MCF 10A (cell line): ENCODE measurements at regions of chr2 and their contacts with region 1.

Region 1: DNA sequence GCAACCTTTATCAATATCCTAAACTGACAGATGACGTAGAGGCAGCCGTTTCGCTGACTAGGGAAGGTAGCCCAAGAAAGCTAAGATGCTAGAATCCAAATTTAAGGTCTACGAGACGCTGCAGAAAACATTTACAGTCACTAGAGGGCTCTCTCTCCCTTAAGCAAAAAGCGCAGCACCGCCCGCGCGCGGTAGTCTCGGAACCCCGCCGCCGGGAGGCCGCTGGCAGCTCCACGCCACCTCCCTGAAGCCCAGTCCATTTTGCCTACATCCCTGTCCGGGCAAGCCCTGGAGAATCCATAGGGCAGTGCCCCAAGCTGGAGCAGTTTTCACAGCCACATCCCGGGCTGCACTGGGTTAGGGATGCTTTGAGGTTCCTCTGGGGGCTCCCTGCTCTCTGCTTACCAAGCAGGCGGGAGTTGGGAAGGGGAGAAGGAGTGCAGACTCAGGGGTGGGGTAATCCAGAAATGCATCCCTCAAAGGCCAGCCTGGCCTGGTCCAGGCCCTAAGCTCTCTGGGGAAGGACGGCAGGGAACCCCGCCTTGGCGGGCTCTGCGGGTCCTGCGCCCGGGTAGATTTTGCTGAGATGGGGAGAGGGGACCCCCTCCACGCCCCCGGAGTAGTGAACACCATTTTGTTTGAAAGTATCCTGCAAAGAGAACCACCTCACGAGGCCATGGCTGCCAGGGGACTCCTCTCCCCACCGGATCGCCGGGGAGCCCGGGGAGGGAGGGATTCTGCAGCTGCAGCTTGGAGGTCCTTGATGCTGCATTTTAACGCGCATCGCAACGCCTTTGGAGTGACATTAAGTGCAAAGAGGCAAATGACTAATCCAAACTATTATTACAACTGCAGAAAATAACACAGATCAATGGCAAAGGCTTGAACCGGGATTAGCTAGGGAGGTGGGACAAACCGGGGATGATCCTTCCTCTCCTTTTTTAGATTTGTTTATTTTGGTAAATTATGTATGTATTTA is 1.3 kb upstream of the DPYSL5 start:
- DNase-seq: peak; percentile 67
- H3K4me3 Mint-ChIP-seq: no peak overlapping the region
- H3K27ac Mint-ChIP-seq: no peak overlapping the region
- H3K4me1 Mint-ChIP-seq: no peaks in the 10 kb centered on the region
- H3K27me3 Mint-ChIP-seq: peaks cover 54% of the 10 kb centered on the region
- CTCF ChIP-seq: peak; percentile 86

Region 2: DNA sequence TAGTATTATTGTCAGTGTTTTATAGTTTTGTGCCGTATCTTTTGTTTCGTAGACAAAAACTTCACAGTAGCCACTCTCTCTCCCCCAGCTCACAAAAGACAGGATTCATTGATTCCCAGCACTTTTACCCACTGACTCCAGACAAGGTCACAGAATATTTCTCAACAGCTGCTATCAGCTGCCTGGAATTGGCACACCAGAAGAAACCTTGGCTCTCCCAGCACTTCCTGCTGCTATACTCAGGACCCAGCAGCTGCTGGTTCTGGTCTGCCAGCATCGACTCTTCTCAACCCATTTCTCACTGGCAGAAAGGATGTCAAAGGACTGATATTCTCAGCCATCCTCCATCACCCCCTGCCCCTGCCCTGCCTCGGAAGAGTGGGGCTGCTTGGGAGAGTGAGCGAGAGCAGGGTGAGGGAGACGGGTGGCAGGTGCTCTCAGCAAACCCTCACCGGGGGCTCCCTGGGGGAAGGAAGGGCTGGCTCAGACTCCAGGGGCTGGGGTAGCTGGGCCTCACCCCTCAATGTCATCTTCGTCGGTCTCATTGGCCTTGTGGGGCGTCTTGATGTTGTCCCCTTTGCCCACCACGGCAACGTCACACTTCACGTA is 362.6 kb before region 1 on chr2:
- CTCF ChIA-PET with region 1: no interaction called
- POLR2A ChIA-PET with region 1: no interaction called
- intact Hi-C with region 1: no loop called
- DNase-seq: no peak
- H3K4me3 Mint-ChIP-seq: no peak overlapping the region
- H3K27ac Mint-ChIP-seq: no peak overlapping the region
- H3K4me1 Mint-ChIP-seq: no peaks in the 10 kb centered on the region
- H3K27me3 Mint-ChIP-seq: peaks cover 22% of the 10 kb centered on the region
- CTCF ChIP-seq: no peak

Region 3: GRCh38 chr2:26685989-26686839 is 160.4 kb before region 1 on chr2:
- CTCF ChIA-PET with region 1: no interaction called
- POLR2A ChIA-PET with region 1: no interaction called
- intact Hi-C with region 1: no loop called
- DNase-seq: no peak
- H3K4me3 Mint-ChIP-seq: no peak overlapping the region
- H3K27ac Mint-ChIP-seq: no peak overlapping the region
- H3K4me1 Mint-ChIP-seq: no peaks in the 10 kb centered on the region
- H3K27me3 Mint-ChIP-seq: peaks cover 66% of the 10 kb centered on the region
- CTCF ChIP-seq: no peak

Region 4: DNA sequence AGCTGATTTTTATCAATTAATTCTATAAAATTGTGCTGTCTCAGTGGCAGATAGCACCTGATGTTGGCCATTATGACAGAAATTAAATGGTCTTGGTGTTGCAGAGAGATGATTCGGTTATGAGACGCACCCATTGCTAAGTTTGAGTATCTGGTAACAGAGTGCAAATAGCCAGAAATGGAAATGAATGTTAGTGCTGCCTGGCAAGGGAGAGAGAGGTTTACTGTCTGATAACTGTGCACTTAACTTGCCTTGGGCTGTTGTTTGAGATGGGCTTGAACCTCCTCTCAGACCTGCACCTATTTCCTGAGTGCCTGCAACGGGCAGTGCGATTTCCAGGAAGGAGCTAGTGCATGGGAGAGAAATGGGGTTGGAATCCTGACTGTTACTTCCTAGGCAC is 13.0 kb after region 1 on chr2:
- CTCF ChIA-PET with region 1: interaction called, 18 read pairs
- POLR2A ChIA-PET with region 1: no interaction called
- intact Hi-C with region 1: no loop called
- DNase-seq: no peak
- H3K4me3 Mint-ChIP-seq: no peak overlapping the region
- H3K27ac Mint-ChIP-seq: no peak overlapping the region
- H3K4me1 Mint-ChIP-seq: no peaks in the 10 kb centered on the region
- H3K27me3 Mint-ChIP-seq: peaks cover 76% of the 10 kb centered on the region
- CTCF ChIP-seq: no peak

Region 5: DNA sequence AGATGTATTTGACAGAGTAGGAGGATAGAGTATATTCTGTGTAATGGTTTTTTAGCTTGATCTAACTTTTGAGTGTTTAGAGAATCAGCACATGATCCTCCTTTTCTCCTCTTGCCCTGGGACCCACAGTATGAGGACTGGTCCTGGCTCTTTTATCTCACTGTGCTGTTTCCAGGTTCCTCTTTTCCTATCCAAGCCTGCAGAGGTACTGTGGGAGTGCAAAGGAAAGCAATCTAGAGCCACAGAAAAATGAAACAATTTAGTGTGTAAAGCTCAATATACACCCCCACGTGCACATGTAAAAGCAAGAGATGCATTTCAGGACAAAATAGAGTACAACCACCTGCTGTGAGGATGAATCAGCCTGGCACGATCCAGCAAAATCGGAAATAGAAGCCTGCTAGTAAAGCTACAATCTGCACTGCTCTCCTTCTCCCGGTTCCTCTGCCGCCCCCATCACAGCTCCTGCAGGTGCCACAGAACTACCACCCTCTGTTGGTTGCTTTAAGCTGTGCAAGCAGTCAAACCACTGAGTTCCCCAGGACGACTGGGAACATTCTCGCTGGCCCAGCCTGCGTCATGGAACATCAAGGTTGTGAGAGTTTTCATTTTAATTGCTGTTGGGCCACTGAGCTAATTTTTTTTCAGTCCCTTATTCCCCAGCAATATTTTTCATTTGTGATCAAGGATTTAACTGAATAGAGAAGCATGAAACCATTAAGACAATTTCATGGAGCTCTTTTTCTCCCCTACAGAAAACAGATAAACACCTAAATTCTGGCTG is 76.0 kb after region 1 on chr2:
- CTCF ChIA-PET with region 1: interaction called, 10 read pairs
- POLR2A ChIA-PET with region 1: no interaction called
- intact Hi-C with region 1: loop called (anchors 1 kb)
- DNase-seq: peak; percentile 68
- H3K4me3 Mint-ChIP-seq: no peak overlapping the region
- H3K27ac Mint-ChIP-seq: no peak overlapping the region
- H3K4me1 Mint-ChIP-seq: peaks cover 8% of the 10 kb centered on the region
- H3K27me3 Mint-ChIP-seq: peaks cover 15% of the 10 kb centered on the region
- CTCF ChIP-seq: peak; percentile 38

Region 6: GRCh38 chr2:26942543-26943295 is 96.1 kb after region 1 on chr2:
- CTCF ChIA-PET with region 1: interaction called, 82 read pairs
- POLR2A ChIA-PET with region 1: no interaction called
- intact Hi-C with region 1: loop called (anchors 1 kb)
- DNase-seq: peak; percentile 63
- H3K4me3 Mint-ChIP-seq: no peak overlapping the region
- H3K27ac Mint-ChIP-seq: no peak overlapping the region
- H3K4me1 Mint-ChIP-seq: peaks cover 7% of the 10 kb centered on the region
- H3K27me3 Mint-ChIP-seq: peaks cover 32% of the 10 kb centered on the region
- CTCF ChIP-seq: peak; percentile 68